GM10248 (cell line): ENCODE measurements at regions of chr2 and their contacts with region 1.

Region 1: DNA sequence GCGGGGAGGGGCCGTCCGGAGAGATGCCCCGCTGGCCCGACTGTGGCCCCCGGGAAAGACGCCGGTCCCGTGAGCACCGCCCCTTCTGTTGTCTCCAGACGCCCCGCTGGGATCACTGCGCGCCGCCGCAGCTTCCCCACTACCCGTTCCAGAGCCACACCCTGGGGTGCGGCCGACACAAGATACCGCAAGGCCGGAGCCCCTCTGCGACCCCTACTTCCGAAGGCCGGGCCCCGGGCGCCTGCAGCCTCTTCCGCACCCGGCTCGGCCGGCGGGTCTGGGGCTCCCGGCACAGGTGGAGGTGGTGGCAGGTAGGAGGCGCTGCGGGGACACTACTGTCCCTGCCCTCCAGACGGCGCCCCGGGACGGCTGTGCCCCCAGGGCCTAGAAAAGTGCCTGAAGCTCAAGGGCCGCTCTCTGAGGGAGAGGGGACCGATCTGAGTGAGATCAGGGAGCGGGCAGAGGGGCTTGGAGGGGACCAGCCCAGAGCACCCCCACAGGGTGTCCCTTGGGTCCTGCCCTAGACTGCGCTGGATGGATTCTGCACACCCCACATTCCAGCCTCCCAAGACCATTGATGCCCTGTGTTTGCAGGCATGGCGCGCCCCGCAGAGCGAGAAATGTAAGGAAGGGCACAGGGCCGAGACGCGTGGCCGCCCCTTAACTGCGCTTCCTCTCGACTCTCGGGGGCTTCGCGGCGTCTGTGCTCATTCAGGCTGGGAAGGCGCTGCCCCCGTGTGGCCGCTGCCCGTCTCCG is 80.0 kb downstream of the GFPT1 start:
- DNase-seq: peak; percentile 92
- CTCF ChIP-seq: peak; percentile 94

Region 2: GRCh38 chr2:68943581-68944568 is 363.1 kb before region 1 on chr2:
- CTCF ChIA-PET with region 1: interaction called, 26 read pairs
- POLR2A ChIA-PET with region 1: no interaction called
- DNase-seq: peak; percentile 55
- CTCF ChIP-seq: peak; percentile 62

Region 3: DNA sequence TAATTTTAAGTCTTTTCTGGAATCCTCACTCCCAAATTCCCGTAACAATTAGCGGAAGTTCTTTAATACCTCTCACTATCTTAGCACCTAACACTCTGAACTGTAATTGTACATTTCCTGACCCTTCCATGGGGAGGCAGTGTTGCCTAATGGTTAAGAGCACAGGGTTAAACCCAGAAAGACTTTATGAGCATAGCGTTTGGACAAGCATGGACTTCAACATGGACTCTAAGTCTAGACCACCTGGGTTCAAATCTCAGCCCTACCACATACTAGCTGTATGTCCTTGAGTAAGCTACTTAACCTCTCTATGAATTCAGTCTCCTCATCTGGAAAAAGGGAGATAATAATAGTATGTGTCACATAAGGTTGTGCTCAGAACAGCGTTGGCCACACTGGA is 281.0 kb before region 1 on chr2:
- CTCF ChIA-PET with region 1: interaction called, 14 read pairs
- POLR2A ChIA-PET with region 1: no interaction called
- DNase-seq: peak; percentile 26
- CTCF ChIP-seq: peak; percentile 53

Region 4: GRCh38 chr2:69322631-69323030 is 15.6 kb after region 1 on chr2:
- CTCF ChIA-PET with region 1: interaction called, 38 read pairs
- POLR2A ChIA-PET with region 1: no interaction called
- DNase-seq: no peak
- CTCF ChIP-seq: no peak

Region 5: DNA sequence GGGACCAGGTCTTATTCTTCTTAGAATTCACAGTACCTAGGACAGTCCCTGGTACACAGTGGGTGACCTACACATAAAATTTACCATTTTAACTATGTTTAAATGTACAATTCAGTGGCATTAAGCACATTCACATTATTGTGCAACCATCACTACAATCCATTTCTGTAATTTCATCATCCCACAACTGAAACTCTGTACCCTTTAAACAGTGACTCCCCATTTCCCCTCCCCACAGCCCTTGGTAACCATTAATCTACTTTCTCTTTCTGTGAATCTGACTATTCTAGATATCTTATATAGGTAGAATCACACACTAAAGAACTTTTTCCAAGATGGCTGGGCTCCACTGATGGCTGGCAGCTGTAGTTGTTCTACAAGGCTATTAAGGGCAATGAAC is 38.4 kb after region 1 on chr2:
- CTCF ChIA-PET with region 1: no interaction called
- POLR2A ChIA-PET with region 1: no interaction called
- DNase-seq: no peak
- CTCF ChIP-seq: no peak